ENCODE measurements at regions of chr6 and their contacts with region 1.

Region 1: GRCh38 chr6:35342258-35343091 is at the start of gene PPARD:
- DNase-seq: peak; percentile 97
- H3K4me3 ChIP-seq: peak within 1 kb of the TSS; percentile 97
- H3K27ac ChIP-seq: peak within 1 kb of the TSS; percentile 64
- H3K4me1 ChIP-seq: peaks cover 13% of the 10 kb centered on the region; the same call in 1 of the 2 replicates
- H3K27me3 ChIP-seq: no peaks in the 10 kb centered on the region
- total RNA-seq, gene PPARD: 13.3 and 15.9 TPM in 2 replicates

Region 2: DNA sequence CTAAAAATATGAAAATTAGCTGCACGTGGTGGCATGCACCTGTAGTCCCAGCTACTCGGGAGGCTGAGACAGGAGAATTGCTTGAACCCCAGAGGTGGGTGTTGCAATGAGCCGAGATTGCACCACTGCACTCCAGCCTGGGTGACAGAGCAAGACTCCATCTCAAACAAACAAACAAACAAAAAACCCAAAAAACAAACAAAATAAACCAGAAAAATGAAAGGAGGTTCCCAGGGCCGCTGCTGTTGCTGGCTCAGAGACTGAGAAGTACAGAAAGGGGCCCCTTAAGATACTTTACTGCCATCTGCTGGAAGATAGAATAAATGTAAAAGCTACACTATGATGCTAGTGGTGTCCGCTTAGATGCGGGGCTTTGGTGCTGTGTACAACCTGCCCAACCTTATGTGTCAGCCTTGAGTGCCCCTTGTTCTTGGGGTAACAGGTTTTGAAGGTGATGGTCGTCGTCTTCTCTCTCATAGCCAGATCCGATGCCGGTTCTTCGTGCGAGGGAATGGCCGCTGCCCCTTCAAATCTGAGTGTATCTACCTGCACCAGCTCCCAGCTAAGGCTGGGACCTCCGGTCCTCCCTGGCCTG is 106.9 kb after region 1 on chr6:
- in situ Hi-C with region 1: loop called (anchors 5 kb)
- DNase-seq: peak; percentile 88
- H3K4me3 ChIP-seq: no peak overlapping the region
- H3K27ac ChIP-seq: no peak overlapping the region
- H3K4me1 ChIP-seq: peaks cover 15% of the 10 kb centered on the region
- H3K27me3 ChIP-seq: no peaks in the 10 kb centered on the region

Measured in GM23248 (cell line).